A549 (cell line): ENCODE measurements at regions of chr1 and their contacts with region 1.

Region 1: GRCh38 chr1:84944767-84945486 is 51.9 kb upstream of the LPAR3 start:
- DNase-seq: peak; percentile 24 to 91
- ATAC-seq: peak; percentile 95 to 97
- H3K4me3 ChIP-seq: peak overlapping the region; percentile 17; the same call in 2 of the 3 replicates
- H3K27ac ChIP-seq: peak overlapping the region; percentile 74 to 86
- H3K4me1 ChIP-seq: peaks cover 14% of the 10 kb centered on the region
- CTCF ChIP-seq: peak; percentile 96
- EP300 ChIP-seq: no peak
- POLR2A ChIP-seq: no peak
- RAD21 ChIP-seq: peak; percentile 64 to 87

Region 2: DNA sequence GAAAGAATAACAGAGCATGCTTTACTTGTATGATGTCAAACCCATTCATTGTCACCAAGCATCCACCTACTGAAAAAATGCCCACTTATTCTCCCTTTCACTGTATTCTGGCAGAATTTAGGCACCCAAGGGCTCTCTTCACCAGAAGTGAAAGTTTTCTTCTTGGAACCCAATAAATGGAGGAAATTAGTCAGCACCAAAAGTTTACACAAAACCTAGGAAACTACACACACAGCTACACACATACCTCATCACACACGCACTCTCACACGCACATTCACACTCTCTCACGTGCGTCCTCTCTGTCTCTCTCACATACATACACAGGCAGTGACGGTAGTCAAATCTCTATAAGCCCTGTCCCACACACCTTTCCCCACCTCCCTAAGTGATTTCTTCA is 14.4 kb after region 1 on chr1:
- CTCF ChIA-PET with region 1: interaction called, 31 read pairs
- POLR2A ChIA-PET with region 1: no interaction called
- DNase-seq: no peak
- ATAC-seq: no peak
- H3K4me3 ChIP-seq: no peak overlapping the region
- H3K27ac ChIP-seq: no peak overlapping the region
- H3K4me1 ChIP-seq: 0 out of 3 replicates have a peak, but pooled peaks cover 5% of the 10 kb centered on the region
- CTCF ChIP-seq: no peak
- EP300 ChIP-seq: no peak
- POLR2A ChIP-seq: no peak
- RAD21 ChIP-seq: no peak

Region 3: GRCh38 chr1:85027242-85027983 is 82.5 kb after region 1 on chr1:
- CTCF ChIA-PET with region 1: interaction called, 17 read pairs
- POLR2A ChIA-PET with region 1: interaction called, 3 read pairs
- DNase-seq: peak in 1 of 2 experiments; percentile 11
- ATAC-seq: peak; percentile 59 to 67; a peak in 3 of 6 replicates
- H3K4me3 ChIP-seq: no peak overlapping the region
- H3K27ac ChIP-seq: no peak overlapping the region
- H3K4me1 ChIP-seq: no peaks in the 10 kb centered on the region
- CTCF ChIP-seq: peak; percentile 24; the same call in 1 of the 3 replicates
- EP300 ChIP-seq: no peak
- POLR2A ChIP-seq: no peak
- RAD21 ChIP-seq: peak in 1 of 2 experiments; percentile 25; a peak in 1 of 5 replicates

Region 4: GRCh38 chr1:85033221-85033620 is 88.3 kb after region 1 on chr1:
- CTCF ChIA-PET with region 1: interaction called, 14 read pairs
- POLR2A ChIA-PET with region 1: no interaction called
- DNase-seq: no peak
- ATAC-seq: no peak
- H3K4me3 ChIP-seq: no peak overlapping the region
- H3K27ac ChIP-seq: no peak overlapping the region
- H3K4me1 ChIP-seq: no peaks in the 10 kb centered on the region
- CTCF ChIP-seq: no peak
- EP300 ChIP-seq: no peak
- POLR2A ChIP-seq: no peak
- RAD21 ChIP-seq: no peak

Region 5: DNA sequence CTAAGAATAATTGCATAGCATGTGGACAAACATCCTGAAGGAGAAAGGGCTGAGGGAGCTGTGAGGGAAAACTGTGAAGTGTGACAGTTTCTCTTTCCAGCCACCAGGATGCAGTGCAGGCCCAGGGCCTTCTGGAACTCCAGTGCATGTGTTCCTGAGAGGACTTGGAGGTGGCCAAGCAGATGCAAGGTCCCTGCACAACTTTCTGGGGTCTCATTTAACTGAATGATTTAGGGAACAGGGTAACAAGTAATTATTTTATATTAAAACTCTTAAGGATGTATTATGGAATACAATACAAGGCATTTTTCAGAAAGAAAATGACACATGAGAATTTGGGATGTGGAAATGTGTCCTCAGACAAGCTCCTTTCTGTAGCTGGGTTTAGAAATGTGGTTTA is 164.5 kb after region 1 on chr1:
- CTCF ChIA-PET with region 1: interaction called, 12 read pairs
- POLR2A ChIA-PET with region 1: no interaction called
- DNase-seq: peak; percentile 49 to 65
- ATAC-seq: peak; percentile 96 to 97
- H3K4me3 ChIP-seq: no peak overlapping the region
- H3K27ac ChIP-seq: no peak overlapping the region
- H3K4me1 ChIP-seq: no peaks in the 10 kb centered on the region
- CTCF ChIP-seq: peak; percentile 69
- EP300 ChIP-seq: no peak
- POLR2A ChIP-seq: no peak
- RAD21 ChIP-seq: peak; percentile 79 to 85

Region 6: DNA sequence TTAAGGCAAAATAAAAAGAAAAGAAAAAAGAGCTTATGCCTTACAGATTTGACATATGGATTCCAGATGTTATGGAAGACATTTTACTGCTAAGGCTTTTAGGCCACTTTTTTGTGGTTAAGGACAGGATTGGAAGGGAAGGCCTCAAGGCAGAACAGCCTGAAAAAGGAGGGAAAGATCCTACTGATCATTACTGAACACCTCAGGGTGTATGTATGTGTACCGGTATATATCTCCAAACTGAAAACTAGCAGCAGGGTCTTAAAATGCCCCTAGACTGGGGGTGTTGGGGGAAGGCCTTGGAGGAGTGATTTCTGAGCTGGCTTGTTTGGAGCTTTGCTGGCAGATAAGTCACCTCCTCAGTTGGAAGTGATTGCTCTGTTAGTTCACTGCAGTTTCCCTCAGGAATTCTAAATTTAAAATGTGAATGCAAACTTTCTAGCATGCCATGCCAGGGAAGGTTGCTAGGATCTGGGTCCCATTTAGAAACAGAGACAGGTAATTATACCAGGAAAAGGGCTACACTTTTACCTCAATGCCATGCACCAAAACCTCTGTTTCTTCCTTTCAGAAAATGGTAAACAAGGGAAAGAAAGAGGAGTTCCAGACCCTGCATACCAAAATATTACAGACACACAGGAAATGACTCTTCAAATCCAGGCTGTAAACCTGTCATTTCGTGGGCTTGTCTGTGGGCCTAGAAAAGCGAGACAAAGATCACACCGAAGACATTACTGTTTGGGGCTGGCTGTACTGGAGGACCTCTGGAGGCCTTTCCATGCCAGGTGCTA is 299.5 kb after region 1 on chr1:
- CTCF ChIA-PET with region 1: interaction called, 14 read pairs
- POLR2A ChIA-PET with region 1: no interaction called
- DNase-seq: no peak
- ATAC-seq: no peak
- H3K4me3 ChIP-seq: no peak overlapping the region
- H3K27ac ChIP-seq: no peak overlapping the region
- H3K4me1 ChIP-seq: no peaks in the 10 kb centered on the region
- CTCF ChIP-seq: no peak
- EP300 ChIP-seq: no peak
- POLR2A ChIP-seq: no peak
- RAD21 ChIP-seq: no peak

Region 7: DNA sequence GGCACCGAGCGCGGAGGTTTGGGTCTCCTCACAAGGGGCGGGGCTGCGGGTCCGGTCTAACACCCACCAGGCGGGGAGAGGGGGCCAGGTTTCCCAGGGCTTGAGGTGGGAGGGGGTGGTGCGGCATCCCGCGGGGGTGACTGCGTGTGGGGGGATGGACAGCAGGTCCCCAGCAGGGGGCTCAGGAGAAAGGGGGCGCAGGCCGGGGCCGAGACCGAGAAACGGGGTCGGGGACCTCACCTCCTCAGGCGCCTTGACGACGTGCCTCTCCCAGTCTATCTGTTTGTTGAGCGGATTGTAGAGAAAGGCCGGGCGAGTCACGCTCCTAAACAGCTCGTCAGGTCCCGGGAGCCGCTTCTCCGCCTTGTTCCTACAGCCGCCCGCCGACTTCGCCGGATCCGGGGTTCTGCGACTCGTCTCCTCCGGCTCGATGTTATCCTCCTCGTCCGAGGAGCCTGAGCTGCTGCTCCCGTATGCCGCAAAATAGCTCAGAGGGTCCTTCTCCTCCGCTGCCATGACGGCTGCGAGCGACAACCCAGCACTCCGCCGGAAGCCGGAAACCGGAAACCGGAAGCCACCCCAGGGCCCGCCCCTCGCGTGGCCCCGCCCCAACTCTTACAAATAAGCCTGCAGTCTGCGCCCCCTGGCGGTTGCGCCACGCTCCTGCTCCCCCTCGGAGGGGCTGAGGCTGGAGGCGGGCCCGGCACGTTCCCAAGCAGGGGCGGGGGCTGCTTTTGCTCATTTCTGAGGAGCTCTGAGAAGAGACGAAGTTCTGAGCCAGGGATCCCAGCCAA is 314.4 kb after region 1 on chr1 and contains the start of gene C1orf52:
- CTCF ChIA-PET with region 1: interaction called, 59 read pairs
- POLR2A ChIA-PET with region 1: interaction called, 13 read pairs
- DNase-seq: peak; percentile 56 to 89
- ATAC-seq: peak; percentile 94 to 96
- H3K4me3 ChIP-seq: peak within 1 kb of the TSS; percentile 98
- H3K27ac ChIP-seq: peak within 1 kb of the TSS; percentile 89 to 90
- H3K4me1 ChIP-seq: peaks cover 4% of the 10 kb centered on the region; the same call in 1 of the 3 replicates
- CTCF ChIP-seq: peak; percentile 78
- EP300 ChIP-seq: no peak
- POLR2A ChIP-seq: peak; percentile 86
- RAD21 ChIP-seq: peak; percentile 42 to 58
- polyA plus RNA-seq, gene C1orf52: 19.7 and 22.4 TPM in 2 replicates